GM10248 (cell line): ENCODE measurements at regions of chr15 and their contacts with region 1.

Region 1: DNA sequence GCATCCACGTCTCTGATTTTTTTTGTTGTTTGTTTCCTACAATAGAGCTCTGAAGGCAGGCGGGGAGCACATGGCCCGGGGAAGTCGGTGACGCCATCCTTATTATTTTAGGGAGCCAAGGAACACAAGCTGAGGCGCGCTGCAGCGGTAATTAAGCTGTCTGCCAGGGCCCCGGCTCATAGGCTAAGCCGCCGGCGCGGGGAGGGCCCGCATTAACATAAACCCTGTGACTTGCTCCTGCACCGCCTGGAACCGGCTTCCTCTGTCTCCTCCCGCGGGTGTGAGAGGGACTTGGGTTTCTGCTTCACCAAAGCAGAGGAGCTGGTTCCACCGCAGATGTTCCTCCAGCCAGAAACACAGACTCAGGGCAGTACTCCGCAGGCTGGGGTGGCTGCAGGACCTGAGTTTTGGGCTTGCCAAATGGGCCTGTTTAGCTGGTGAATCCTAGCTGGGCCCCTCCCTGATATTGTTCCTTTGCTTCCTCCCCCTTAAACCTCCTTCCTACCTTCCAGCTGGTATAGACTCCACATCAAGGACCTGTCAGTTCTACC is 25.3 kb downstream of the ANP32A start:
- DNase-seq: peak; percentile 78
- CTCF ChIP-seq: no peak

Region 2: DNA sequence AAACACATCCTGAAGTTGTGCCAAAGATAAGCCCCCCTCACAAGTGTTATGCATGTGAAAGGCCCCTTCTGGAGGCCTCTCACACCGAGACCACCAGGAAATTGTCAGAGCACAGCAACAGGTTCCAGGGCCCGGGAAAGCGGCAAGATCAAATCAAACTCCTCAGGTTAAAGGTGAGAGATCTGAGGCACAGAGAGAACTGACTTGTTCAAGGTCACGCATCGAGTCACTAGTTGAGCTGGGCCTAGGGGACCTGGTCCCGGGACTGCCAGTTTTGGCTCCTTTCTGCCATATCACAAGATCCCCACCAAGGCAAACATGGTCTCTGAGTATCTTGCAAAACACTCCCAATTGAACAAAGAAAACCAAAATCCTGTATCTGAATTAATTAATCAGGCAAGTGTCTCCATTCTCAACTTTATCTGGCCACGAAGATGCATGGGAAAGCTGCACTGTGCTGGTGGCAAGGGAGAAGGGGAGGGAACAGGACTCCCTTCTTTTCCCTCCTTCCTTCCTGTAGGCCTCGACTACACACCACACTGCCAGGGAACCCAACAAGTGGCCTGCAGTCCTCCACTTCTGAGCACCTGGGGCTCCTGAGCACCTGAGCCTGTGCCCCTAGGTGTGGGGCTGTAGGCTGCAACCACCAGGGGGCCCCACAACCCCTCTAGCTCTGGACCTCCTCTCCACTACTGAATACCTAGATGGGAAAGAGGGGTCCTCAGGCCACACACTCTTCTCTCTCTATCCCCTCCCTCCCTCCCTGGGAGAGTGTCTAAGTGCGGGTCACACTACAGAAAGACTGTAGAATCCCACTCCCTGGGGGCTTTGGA is 11.9 kb before region 1 on chr15:
- CTCF ChIA-PET with region 1: interaction called, 39 read pairs
- POLR2A ChIA-PET with region 1: interaction called, 3 read pairs
- DNase-seq: peak; percentile 70
- CTCF ChIP-seq: peak; percentile 73

Region 3: GRCh38 chr15:68817304-68818065 is 22.1 kb after region 1 on chr15:
- CTCF ChIA-PET with region 1: interaction called, 15 read pairs
- POLR2A ChIA-PET with region 1: interaction called, 3 read pairs
- DNase-seq: peak; percentile 71
- CTCF ChIP-seq: no peak

Region 4: DNA sequence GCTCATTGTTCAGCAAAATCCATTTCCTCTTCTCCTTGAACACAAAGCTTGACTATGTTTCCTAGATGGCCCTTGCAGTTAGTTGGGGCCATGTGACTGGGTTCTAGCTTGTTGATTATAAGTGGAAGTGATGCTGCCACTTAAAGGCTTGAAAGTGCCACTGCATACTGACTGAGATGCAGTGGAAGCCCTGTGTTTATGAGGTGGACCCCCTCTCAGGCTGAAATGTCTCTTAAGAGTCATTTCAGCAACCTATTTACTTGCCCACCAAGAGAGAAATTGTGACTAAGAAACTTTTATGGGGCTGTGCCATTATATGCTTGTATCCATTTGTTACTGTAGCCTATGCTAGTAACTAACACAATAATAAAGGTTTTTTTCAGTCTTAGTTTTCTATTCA is 33.7 kb after region 1 on chr15:
- CTCF ChIA-PET with region 1: interaction called, 15 read pairs
- POLR2A ChIA-PET with region 1: no interaction called
- DNase-seq: peak; percentile 42
- CTCF ChIP-seq: peak; percentile 68

Region 5: DNA sequence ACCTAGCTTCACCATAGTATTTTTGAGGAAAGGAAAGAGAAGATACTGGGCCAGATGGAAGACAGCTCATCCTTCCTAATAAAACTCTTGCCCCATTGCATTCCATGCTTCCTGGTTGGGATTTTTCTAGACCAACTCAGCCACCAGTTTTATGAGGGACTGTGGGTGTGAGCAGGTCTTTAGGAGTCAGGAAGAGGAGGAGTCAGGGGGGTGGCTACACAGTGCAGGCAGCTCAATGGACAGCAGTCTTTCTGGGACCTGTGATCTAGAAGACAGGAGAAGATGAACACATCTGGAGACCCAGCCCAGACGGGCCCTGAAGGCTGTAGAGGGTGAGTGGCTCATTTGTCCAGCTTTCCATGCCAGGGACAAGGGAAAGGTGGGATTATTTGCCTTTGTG is 219.1 kb after region 1 on chr15 and contains the start of gene NOX5:
- CTCF ChIA-PET with region 1: no interaction called
- POLR2A ChIA-PET with region 1: no interaction called
- DNase-seq: no peak
- CTCF ChIP-seq: no peak